ENCODE measurements at regions of chr7 and their contacts with region 1.

Region 1: GRCh38 chr7:98021588-98022351 is 31.8 kb upstream of the OCM2 start:
- DNase-seq: peak; percentile 86
- CTCF ChIP-seq: peak; percentile 96

Region 2: GRCh38 chr7:98034081-98035035 is 12.6 kb after region 1 on chr7:
- CTCF ChIA-PET with region 1: interaction called, 13 read pairs
- POLR2A ChIA-PET with region 1: no interaction called
- DNase-seq: no peak
- CTCF ChIP-seq: no peak

Measured in GM10248 (cell line).